Activated CD4-positive, alpha-beta memory T cell treated with anti-CD3 and anti-CD28 coated beads for 36 hours (primary cell): ENCODE measurements at regions of chr3 and their contacts with region 1.

Region 1: DNA sequence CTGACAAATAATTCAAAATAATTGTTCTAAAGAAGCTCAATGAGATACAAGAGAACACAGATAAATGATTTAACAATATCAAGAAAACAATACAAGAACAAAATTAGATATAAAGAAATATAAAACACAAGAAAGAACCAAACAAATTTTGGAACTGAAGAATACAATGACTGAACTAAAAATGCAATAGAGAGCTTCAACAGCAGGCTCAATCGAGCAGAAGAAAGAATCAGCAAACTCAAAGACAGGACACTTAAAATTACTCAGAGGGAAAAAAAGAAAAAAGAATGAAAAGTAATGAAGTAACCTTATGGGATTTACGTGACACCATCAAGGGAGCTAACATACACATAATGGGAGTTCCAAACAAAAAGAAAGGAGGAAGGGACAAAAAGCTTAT is 32.1 kb downstream of the CCDC54 start:
- DNase-seq: no peak
- H3K4me3 Mint-ChIP-seq: no peak overlapping the region
- H3K27ac Mint-ChIP-seq: no peak overlapping the region
- H3K4me1 Mint-ChIP-seq: peaks cover 5% of the 10 kb centered on the region
- H3K27me3 Mint-ChIP-seq: no peaks in the 10 kb centered on the region

Region 2: GRCh38 chr3:107421170-107421792 is 11.9 kb after region 1 on chr3:
- CTCF ChIA-PET with region 1: interaction called, 12 read pairs
- POLR2A ChIA-PET with region 1: no interaction called
- intact Hi-C with region 1: no loop called
- DNase-seq: no peak
- H3K4me3 Mint-ChIP-seq: no peak overlapping the region
- H3K27ac Mint-ChIP-seq: no peak overlapping the region
- H3K4me1 Mint-ChIP-seq: peaks cover 3% of the 10 kb centered on the region
- H3K27me3 Mint-ChIP-seq: peaks cover 4% of the 10 kb centered on the region

Region 3: DNA sequence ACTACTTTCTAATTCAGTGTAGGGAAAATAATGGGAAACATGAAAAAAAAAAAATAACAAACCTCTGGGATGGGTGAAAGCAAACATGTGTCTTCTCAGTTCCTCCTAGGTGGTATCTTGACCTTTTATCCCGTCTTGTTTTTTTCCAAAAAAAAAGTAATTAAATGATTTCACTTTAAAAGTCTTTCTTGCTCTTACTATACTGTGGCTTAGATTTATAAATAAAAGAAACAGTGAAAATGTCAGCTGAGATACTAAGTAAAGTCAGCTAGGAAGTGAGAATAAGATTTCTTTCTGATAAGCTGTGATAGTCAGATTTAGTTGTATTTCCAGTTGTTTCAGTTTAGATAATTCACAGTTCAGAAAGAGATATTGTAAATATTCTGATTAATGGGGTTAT is 150.8 kb after region 1 on chr3:
- CTCF ChIA-PET with region 1: no interaction called
- POLR2A ChIA-PET with region 1: no interaction called
- intact Hi-C with region 1: no loop called
- DNase-seq: no peak
- H3K4me3 Mint-ChIP-seq: no peak overlapping the region
- H3K27ac Mint-ChIP-seq: no peak overlapping the region
- H3K4me1 Mint-ChIP-seq: peaks cover 41% of the 10 kb centered on the region
- H3K27me3 Mint-ChIP-seq: no peaks in the 10 kb centered on the region